ENCODE measurements at regions of chr4 and their contacts with region 1.

Region 1: DNA sequence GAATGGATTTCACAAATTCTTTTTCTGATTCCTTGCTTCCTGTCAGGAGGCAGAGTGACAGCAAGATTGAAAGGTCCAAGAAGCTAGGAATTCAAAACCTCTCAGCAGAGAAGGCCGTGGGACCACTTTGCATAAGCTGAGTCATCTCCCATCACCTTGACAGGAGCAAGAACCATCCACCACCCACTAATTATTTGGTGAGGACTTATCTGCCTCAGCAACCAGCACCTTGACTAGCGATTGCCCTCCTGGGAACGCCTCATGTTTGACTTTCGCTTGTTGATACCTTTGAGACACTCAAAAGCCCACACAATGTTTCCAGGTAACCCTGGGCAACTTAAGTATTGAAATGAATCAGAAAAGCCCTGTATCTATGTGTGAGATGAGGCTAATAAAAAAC is 233.5 kb upstream of the GYPA start:
- DNase-seq: no peak
- H3K4me3 Mint-ChIP-seq: no peak overlapping the region
- H3K27ac Mint-ChIP-seq: no peak overlapping the region
- H3K4me1 Mint-ChIP-seq: no peaks in the 10 kb centered on the region
- H3K27me3 Mint-ChIP-seq: no peaks in the 10 kb centered on the region
- CTCF ChIP-seq: no peak

Region 2: GRCh38 chr4:144283526-144283925 is 90.5 kb before region 1 on chr4:
- CTCF ChIA-PET with region 1: no interaction called
- POLR2A ChIA-PET with region 1: no interaction called
- intact Hi-C with region 1: loop called (anchors 5 kb)
- DNase-seq: no peak
- H3K4me3 Mint-ChIP-seq: no peak overlapping the region
- H3K27ac Mint-ChIP-seq: no peak overlapping the region
- H3K4me1 Mint-ChIP-seq: no peaks in the 10 kb centered on the region
- H3K27me3 Mint-ChIP-seq: no peaks in the 10 kb centered on the region
- CTCF ChIP-seq: no peak

Region 3: GRCh38 chr4:144399927-144400326 is 25.9 kb after region 1 on chr4:
- CTCF ChIA-PET with region 1: no interaction called
- POLR2A ChIA-PET with region 1: no interaction called
- intact Hi-C with region 1: no loop called
- DNase-seq: peak; percentile 98
- H3K4me3 Mint-ChIP-seq: no peak overlapping the region
- H3K27ac Mint-ChIP-seq: peak overlapping the region; percentile 42
- H3K4me1 Mint-ChIP-seq: peaks cover 11% of the 10 kb centered on the region
- H3K27me3 Mint-ChIP-seq: no peaks in the 10 kb centered on the region
- CTCF ChIP-seq: no peak

Region 4: GRCh38 chr4:144894573-144894972 is 520.5 kb after region 1 on chr4:
- CTCF ChIA-PET with region 1: no interaction called
- POLR2A ChIA-PET with region 1: no interaction called
- intact Hi-C with region 1: no loop called
- DNase-seq: peak; percentile 93
- H3K4me3 Mint-ChIP-seq: no peak overlapping the region
- H3K27ac Mint-ChIP-seq: no peak overlapping the region
- H3K4me1 Mint-ChIP-seq: peaks cover 11% of the 10 kb centered on the region
- H3K27me3 Mint-ChIP-seq: no peaks in the 10 kb centered on the region
- CTCF ChIP-seq: no peak